Right cardiac atrium (tissue), 5 donors: ENCODE measurements at regions of chr11 and their contacts with region 1.

Region 1: DNA sequence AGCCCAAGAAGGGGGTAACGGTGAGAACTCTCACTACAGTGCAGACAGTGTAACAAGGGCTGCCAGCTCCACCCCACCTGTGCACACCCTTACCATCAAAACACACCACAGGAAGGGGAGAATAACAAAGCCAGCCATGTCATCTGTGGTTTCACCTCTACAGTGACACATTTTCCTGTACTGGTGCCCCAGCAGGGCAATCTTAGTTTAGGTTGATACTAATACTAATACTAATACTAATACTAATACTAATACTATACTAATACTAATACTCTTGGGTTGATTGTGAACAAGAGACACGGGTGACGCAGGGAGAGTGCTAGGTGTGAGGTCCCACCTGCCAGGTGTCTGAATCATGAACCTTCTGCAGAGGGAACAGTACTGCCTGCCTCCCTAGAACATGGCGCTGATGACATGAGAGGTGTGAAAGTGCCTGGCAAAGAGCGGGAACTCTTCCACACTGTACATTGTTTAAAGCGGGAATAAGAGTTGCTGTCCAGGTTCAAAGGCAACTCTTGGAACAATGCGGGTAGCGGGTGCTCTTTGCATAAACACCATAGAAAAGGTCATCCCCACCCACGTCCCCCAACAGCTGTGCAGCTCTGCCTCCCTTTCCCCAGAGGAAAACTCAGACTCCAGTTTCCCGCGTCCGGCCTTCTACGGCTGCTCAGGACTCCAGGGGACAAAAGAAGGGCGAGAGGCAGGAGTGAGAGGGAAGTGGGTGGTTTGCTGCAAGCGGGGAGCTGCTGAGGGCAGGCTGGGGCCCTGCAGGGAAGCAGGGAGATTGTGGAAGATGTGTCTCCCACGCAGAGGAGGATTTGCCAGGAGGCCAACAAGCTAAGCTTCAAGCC is 25.0 kb upstream of the TMPRSS4 start:
- DNase-seq: no peak
- ATAC-seq: no peak
- H3K4me3 ChIP-seq: no peak overlapping the region
- H3K27ac ChIP-seq: no peak overlapping the region
- H3K4me1 ChIP-seq: no peaks in the 10 kb centered on the region
- H3K27me3 ChIP-seq: no peaks in the 10 kb centered on the region

Region 2: GRCh38 chr11:117426269-117426685 is 625.6 kb before region 1 on chr11:
- intact Hi-C with region 1: loop called in 1 of 4 experiments (anchors 10 kb)
- DNase-seq: peak; percentile 58 to 85 (median 85)
- ATAC-seq: peak; percentile 58 to 69
- H3K4me3 ChIP-seq: no peak overlapping the region
- H3K27ac ChIP-seq: no peak overlapping the region
- H3K4me1 ChIP-seq: no peaks in the 10 kb centered on the region
- H3K27me3 ChIP-seq: no peaks in the 10 kb centered on the region

Region 3: DNA sequence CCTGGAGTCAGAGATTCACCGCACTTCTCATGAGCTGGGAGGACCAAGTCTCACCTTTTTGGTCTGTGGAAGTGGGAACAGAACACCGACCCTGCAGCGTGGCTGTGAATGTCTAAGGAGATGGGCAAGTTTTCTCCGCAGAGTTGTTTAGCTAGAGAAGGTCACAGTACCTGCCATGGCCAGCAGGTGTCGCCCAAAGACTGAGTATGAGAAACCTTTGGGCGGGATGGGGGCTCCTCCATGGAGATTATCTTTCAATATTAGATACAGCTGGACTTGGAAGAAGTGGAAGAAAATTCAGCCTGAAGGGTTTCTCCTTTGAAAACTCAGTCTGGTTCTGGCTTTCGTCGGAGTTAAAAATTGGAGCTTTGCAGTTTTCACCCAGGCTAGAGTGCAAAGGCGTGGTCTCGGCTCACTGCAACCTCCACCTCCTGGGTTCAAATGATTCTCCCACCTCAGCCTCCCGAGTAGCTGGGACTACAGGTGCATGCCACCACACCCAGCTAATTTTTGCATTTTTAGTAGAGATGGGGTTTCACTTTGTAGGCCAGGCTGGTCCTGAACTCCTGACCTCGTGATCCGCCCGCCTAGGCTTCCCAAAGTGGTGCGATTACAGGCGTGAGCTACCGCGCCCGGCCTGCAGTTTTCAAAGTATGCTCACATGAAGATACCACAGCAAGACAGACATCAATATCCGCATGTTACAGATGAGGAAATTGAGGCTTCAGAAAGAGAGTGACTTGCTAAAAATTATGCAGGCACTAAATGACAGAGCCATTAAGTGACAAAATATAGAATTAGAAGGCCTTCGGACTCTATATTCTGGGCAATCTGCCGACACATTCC is 244.1 kb before region 1 on chr11:
- intact Hi-C with region 1: loop called in 1 of 4 experiments (anchors 10 kb)
- DNase-seq: peak; percentile 78 to 95 (median 90)
- ATAC-seq: peak; percentile 53 to 60
- H3K4me3 ChIP-seq: no peak overlapping the region
- H3K27ac ChIP-seq: no peak overlapping the region
- H3K4me1 ChIP-seq: no peaks in the 10 kb centered on the region
- H3K27me3 ChIP-seq: no peaks in the 10 kb centered on the region

Region 4: DNA sequence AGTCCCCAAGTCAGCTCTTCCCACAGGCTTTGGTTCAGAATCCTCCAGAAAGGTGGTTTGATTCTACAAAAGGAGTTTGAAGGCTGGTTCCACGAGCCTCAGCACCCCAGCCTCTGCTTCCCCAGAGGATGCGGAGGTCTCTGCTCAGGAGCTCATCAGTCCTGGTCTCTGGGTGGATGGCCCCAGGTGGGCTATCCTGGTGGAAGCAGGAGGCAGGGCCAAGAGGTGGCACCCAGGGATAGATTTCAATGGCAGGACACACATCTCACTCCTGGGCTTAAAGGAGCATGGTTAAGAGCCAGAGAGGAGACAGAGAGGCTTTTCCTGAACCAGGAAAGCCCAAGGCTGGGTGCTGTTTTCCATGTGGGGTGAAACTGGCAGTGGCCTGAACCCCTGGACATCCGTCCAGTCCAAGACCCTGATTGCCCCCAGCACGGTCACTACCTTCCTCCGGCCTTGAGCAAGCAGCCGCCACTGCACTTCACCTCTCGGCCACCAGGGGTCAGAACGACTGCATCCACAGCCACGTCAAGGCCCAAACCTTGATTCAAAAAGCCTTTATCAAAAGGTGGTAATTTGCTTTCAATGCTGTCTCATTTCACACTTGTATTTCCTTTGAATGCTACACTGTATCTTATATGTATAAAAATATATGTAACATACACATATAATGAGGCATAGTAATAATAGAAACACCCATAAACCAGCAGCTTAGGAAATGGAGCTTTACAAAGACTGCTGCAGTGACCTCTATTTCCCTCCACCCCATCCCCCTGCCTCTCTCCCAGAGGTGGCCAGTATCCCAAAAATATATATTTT is 208.0 kb before region 1 on chr11:
- intact Hi-C with region 1: loop called (anchors 5 to 10 kb)
- DNase-seq: peak; percentile 82 to 94 (median 92)
- ATAC-seq: peak; percentile 64 to 81
- H3K4me3 ChIP-seq: no peak overlapping the region
- H3K27ac ChIP-seq: no peak overlapping the region
- H3K4me1 ChIP-seq: no peaks in the 10 kb centered on the region
- H3K27me3 ChIP-seq: no peaks in the 10 kb centered on the region

Region 5: DNA sequence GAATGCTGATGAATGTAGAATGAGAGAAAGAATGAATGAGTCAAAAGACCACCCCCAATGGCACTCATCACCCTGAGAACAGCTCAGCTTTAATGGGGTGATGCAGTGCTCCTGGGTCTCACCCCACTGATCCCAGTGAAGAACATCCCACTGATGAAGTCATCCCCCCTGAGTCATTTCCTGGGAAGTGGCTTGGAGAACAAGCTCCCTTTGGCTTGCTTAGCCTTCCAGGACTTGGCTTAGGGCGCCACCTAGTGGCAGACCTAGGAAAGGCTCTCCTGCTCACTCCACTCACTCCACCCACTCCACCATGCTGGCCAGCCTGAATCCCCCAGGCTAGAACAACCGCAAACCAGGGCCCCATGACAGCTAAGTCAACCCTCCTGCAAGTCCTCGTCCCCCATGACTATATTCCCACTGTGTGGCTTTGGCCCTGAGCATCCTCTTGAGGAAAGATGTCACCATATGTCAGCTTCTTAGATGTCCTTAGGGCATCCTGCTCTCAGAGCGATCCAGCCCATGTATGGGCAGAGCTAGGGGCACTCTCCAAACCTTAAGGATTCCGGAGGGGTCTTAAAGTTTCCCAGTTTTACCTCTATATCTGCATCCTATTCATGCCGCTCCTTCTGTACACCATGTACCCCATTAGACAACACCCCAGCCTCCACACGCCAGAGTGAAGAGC is 104.9 kb before region 1 on chr11:
- intact Hi-C with region 1: loop called (anchors 5 to 10 kb)
- DNase-seq: peak; percentile 89 to 95 (median 94)
- ATAC-seq: peak; percentile 93 to 95
- H3K4me3 ChIP-seq: no peak overlapping the region
- H3K27ac ChIP-seq: no peak overlapping the region
- H3K4me1 ChIP-seq: no peaks in the 10 kb centered on the region
- H3K27me3 ChIP-seq: no peaks in the 10 kb centered on the region

Region 6: GRCh38 chr11:117961896-117962295 is 89.9 kb before region 1 on chr11:
- intact Hi-C with region 1: no loop called
- DNase-seq: no peak
- ATAC-seq: no peak
- H3K4me3 ChIP-seq: no peak overlapping the region
- H3K27ac ChIP-seq: no peak overlapping the region
- H3K4me1 ChIP-seq: no peaks in the 10 kb centered on the region
- H3K27me3 ChIP-seq: no peaks in the 10 kb centered on the region

Region 7: GRCh38 chr11:118263695-118264567 is 212.1 kb after region 1 on chr11 and contains the start of gene MPZL2:
- intact Hi-C with region 1: no loop called
- DNase-seq: peak; percentile 42 to 69 (median 54)
- ATAC-seq: peak; percentile 88 to 90
- H3K4me3 ChIP-seq: peak within 1 kb of the TSS; percentile 50
- H3K27ac ChIP-seq: no peak within 1 kb of the TSS
- H3K4me1 ChIP-seq: peaks cover 8% of the 10 kb centered on the region
- H3K27me3 ChIP-seq: no peaks in the 10 kb centered on the region
- total RNA-seq, gene MPZL2: 8.1 to 18.7 (median 9.0) TPM